T-cell (primary cell): ENCODE measurements at regions of chr2 and their contacts with region 1.

Region 1: DNA sequence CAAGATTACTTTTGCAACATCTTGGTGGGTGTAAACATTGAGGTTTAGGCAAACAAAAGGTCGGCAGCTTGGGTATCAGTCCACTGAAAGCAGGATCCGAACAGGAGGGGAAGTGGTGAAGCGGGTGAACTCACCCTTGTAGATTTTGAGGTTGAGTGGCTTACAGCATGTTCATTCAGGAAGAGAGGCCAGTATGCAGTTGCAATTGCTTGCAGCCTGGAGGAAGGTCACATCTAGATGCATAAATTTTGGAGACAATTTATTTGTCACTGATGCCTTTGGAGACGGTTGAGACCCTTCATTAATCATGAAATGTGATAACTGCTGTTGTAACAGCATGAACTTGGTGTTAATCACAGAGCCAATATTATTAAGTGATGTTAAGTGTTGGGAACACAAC is 131.1 kb downstream of the LTBP1 start:
- DNase-seq: no peak
- ATAC-seq: peak in 1 of 4 experiments; percentile 19
- H3K4me3 ChIP-seq: no peak overlapping the region
- H3K4me3 Mint-ChIP-seq: no peak overlapping the region
- H3K27ac ChIP-seq: no peak overlapping the region
- H3K27ac Mint-ChIP-seq: no peak overlapping the region
- H3K4me1 ChIP-seq: no peaks in the 10 kb centered on the region
- H3K4me1 Mint-ChIP-seq: no peaks in the 10 kb centered on the region
- H3K27me3 ChIP-seq: peaks cover 0 to 3% of the 10 kb centered on the region in 2 experiments
- H3K27me3 Mint-ChIP-seq: peaks cover under 1 to 2% of the 10 kb centered on the region in 2 donors

Region 2: GRCh38 chr2:33153008-33153407 is 75.2 kb after region 1 on chr2:
- CTCF ChIA-PET with region 1: no interaction called
- POLR2A ChIA-PET with region 1: interaction called in 1 of 2 experiments, 11 read pairs
- DNase-seq: no peak
- ATAC-seq: no peak
- H3K4me3 ChIP-seq: no peak overlapping the region
- H3K4me3 Mint-ChIP-seq: no peak overlapping the region
- H3K27ac ChIP-seq: no peak overlapping the region
- H3K27ac Mint-ChIP-seq: no peak overlapping the region
- H3K4me1 ChIP-seq: no peaks in the 10 kb centered on the region
- H3K4me1 Mint-ChIP-seq: no peaks in the 10 kb centered on the region
- H3K27me3 ChIP-seq: no peaks in the 10 kb centered on the region
- H3K27me3 Mint-ChIP-seq: peaks cover 0 to 9% of the 10 kb centered on the region in 2 donors